ENCODE measurements at regions of chr15 and their contacts with region 1.

Region 1: DNA sequence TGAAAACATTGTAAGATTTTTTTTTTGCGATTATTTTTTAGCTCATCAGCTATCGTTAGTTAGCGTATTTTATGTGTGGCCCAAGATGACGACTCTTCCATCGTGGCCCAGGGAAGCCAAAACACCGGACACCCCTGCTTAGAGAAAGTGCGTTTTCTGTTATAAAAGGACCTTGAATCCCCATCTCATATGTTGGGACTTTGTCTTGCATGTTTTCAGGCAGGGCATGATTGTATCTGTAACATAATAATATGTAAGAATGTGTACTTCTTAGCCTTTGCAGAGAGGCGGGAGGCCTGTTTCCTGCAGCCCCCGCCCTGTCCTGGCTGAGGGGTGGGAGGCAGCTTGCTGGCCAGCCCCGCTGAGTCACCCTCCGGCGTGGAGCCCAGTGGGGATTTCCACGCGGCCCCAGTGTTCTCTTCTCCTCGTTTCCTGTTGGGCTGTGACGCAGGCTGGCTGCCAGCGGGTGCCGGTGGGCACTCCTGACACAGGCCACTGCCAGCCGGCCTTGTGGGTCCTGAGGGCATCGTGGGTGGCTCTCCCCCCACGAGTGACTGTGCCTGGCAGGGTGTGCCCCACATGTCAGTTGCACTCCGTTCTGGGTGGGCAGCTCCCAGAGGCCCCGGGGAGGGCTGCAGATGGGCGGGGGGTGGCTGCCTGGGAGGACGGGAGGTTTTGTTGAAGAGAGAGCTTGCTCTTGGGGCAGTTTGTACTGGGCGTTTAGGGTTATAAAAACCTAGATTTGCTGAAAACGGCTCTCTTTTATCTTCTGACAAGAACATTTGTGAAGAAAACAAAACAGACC is 55.6 kb downstream of the SMAD3 start:
- DNase-seq: peak; percentile 98
- H3K4me3 ChIP-seq: no peak overlapping the region
- H3K27ac ChIP-seq: peak overlapping the region; percentile 92
- H3K4me1 ChIP-seq: peaks cover 82% of the 10 kb centered on the region
- H3K27me3 ChIP-seq: no peaks in the 10 kb centered on the region
- CTCF ChIP-seq: no peak
- POLR2A ChIP-seq: no peak

Region 2: DNA sequence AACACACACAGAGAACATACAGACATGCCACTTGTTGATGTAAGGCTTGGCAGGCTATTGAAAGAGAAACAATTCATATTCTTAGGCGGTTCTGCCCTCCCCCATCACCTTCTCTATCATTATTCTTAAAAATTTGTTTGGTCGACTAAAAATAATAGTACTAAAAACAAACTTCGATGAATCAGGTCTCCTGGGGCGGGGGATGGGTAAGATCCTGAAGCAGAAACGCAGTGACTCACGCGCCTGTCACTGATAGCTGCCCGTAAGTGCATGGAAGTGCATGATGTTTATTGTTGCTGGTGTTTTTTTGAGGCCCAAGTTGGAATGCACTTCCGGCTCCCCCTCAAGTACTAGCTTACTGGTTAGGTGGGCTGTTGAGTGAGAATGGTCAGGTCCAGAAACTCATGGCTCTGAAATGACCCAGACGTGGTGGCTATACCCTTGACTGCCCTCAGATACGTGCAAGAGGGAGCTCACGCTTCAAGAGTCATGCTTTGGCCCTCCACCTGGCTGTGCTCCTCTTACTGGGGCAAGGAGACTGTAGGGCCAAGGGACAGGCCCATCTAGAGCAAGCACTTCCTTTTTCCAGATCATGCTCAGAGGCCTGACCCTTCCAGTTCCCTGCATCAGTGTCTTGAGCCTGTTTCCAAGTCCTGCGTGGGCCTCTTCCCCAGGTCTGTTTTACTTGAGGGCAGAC is 44.7 kb before region 1 on chr15:
- CTCF ChIA-PET with region 1: no interaction called
- POLR2A ChIA-PET with region 1: no interaction called
- dilution Hi-C with region 1: no loop called
- intact Hi-C with region 1: loop called (anchors 2 kb)
- DNase-seq: peak; percentile 95
- H3K4me3 ChIP-seq: no peak overlapping the region
- H3K27ac ChIP-seq: peak overlapping the region; percentile 76
- H3K4me1 ChIP-seq: peaks cover 72% of the 10 kb centered on the region
- H3K27me3 ChIP-seq: no peaks in the 10 kb centered on the region
- CTCF ChIP-seq: no peak
- POLR2A ChIP-seq: no peak

Region 3: DNA sequence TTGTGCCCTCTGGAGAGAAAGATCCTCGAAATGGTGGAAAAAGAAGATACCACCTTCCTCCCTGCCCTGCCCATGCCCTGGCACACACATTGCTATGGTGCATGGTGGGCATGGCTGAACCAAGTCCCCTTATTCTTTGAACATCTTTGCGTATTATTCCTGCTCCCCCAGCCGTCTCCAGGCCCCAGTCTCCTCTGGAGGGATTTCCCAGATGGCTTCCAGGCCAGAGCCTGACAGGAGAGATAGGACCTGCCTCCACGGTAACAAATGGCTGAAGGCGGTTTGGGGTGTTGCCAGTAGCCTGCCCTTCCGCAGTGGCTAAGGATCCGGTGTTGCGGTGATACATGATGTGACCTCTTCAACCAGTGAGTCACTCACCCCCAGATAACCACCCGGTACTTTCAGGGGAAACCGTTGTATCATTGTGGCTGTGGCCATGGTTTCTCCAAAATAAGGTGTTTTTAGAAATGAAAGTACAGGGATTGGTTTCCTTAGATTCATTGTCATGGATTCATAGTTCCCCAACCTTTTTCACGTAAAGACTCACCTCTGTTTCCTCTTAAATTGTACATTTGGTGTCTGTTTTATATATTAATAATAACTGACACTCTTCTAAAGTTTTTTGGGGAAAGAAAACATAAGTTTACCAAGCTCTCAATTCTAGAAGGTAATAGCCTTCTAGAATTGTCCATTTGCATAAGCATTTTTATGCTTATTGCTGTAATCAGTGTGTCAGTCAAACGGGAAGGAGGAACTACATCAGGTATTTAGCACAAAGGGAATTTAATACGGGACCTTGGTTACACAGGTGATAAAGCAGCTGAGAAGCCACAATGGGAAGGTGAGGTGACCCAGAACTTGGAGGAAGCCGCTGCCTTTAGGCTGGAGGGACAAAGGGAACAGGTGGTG is 29.7 kb before region 1 on chr15:
- CTCF ChIA-PET with region 1: no interaction called
- POLR2A ChIA-PET with region 1: no interaction called
- dilution Hi-C with region 1: no loop called
- intact Hi-C with region 1: loop called (anchors 1 kb)
- DNase-seq: peak; percentile 99
- H3K4me3 ChIP-seq: peak overlapping the region in 1 of 3 experiments; percentile 2
- H3K27ac ChIP-seq: peak overlapping the region; percentile 99
- H3K4me1 ChIP-seq: peaks cover 57% of the 10 kb centered on the region
- H3K27me3 ChIP-seq: no peaks in the 10 kb centered on the region
- CTCF ChIP-seq: no peak
- POLR2A ChIP-seq: peak; percentile 61

Region 4: DNA sequence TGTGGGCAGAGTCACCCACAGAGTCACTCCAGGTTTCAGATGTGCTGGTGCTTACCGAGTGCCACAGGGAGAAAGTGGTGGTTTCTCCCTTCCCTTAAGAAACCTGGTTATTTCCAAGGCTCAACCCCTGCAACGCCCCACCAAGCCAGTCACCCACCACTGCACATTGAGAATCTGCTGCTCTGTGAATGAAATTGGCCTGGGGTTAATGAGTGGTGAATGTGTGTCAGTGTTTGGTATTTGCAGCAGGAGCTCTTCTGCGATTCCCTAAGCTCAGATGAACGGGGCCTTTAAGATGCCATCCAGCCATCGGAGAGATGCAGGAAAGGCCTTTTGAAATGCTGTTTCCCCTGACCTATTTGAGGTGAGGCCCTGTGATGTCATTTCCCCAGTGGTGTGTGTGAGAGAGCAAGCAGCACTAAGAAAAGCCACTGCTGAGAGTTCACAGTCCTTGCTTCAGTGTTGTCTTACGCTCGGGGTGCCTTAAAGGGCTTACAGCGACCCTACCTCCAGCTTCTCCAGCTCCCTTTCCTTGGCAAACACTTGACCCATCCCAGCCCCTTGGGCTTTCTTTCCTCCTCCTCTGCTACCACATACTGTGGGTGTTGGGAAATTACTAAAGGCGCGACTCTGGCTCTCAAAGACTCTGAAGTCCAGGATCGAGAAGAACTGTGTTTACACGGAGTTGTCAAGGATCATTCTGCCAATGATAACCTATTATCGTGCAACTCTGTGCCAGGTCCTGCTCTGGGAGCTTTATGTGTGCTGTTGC is 13.2 kb after region 1 on chr15:
- CTCF ChIA-PET with region 1: interaction called, 8 read pairs
- POLR2A ChIA-PET with region 1: interaction called, 5 read pairs
- dilution Hi-C with region 1: no loop called
- intact Hi-C with region 1: loop called (anchors 1 kb)
- DNase-seq: peak; percentile 88
- H3K4me3 ChIP-seq: peak overlapping the region in 1 of 3 experiments; percentile 3
- H3K27ac ChIP-seq: peak overlapping the region; percentile 77
- H3K4me1 ChIP-seq: peaks cover 79% of the 10 kb centered on the region
- H3K27me3 ChIP-seq: no peaks in the 10 kb centered on the region
- CTCF ChIP-seq: no peak
- POLR2A ChIP-seq: no peak

Region 5: DNA sequence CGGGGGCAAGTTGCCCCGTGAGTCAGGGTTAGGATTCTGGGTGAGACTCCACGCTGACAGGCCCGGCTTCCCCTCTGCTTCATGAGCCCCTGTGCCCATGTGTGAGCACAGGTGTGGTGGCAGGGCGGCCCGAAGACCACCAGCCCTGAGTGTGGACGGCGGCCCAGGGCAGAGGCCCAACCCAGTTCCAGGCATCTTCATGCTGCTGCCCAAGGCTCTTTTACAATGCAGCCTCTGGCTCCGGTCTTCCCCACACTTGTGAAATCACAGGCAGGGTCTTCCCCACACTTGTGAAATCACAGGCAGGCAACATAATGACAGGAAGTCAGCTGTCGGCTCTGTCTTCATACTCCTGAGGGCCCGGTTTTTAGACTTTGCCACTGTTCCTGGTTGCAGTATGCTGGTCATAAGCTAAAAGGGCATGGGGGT is 54.6 kb after region 1 on chr15:
- CTCF ChIA-PET with region 1: interaction called, 6 read pairs
- POLR2A ChIA-PET with region 1: no interaction called
- dilution Hi-C with region 1: no loop called
- intact Hi-C with region 1: loop called (anchors 1 kb)
- DNase-seq: peak; percentile 54
- H3K4me3 ChIP-seq: no peak overlapping the region
- H3K27ac ChIP-seq: peak overlapping the region; percentile 87
- H3K4me1 ChIP-seq: peaks cover 56% of the 10 kb centered on the region
- H3K27me3 ChIP-seq: no peaks in the 10 kb centered on the region
- CTCF ChIP-seq: no peak
- POLR2A ChIP-seq: no peak

Measured in endothelial cell of umbilical vein (primary cell).